Dorsolateral prefrontal cortex (tissue), 120 donors: ENCODE measurements at regions of chr14 and their contacts with region 1.

Region 1: GRCh38 chr14:23379366-23380196 is 2.7 kb downstream of the CMTM5 start:
- DNase-seq: peak in 2 of 10 donors; percentile 41 to 62
- H3K4me3 ChIP-seq: peak overlapping the region in 20 of 59 donors; percentile 46 to 78 (median 62)
- H3K27ac ChIP-seq: peak overlapping the region in 54 of 59 donors; percentile 43 to 99 (median 95)
- H3K27me3 ChIP-seq: no peaks in the 10 kb centered on the region
- CTCF ChIP-seq: peak; percentile 28 to 95 (median 80)

Region 2: GRCh38 chr14:23269193-23269592 is 110.4 kb before region 1 on chr14:
- intact Hi-C with region 1: loop called (anchors 5 to 10 kb)
- DNase-seq: no peak
- H3K4me3 ChIP-seq: no peak overlapping the region
- H3K27ac ChIP-seq: no peak overlapping the region
- H3K27me3 ChIP-seq: no peaks in the 10 kb centered on the region
- CTCF ChIP-seq: no peak

Region 3: GRCh38 chr14:23320774-23321571 is 58.6 kb before region 1 on chr14 and contains the start of gene PABPN1:
- intact Hi-C with region 1: loop called in 1 of 2 experiments (anchors 2 kb)
- DNase-seq: peak; percentile 96 to 100 (median 100)
- H3K4me3 ChIP-seq: peak within 1 kb of the TSS; percentile 74 to 97 (median 89)
- H3K27ac ChIP-seq: peak within 1 kb of the TSS; percentile 88 to 99 (median 98)
- H3K27me3 ChIP-seq: no peaks in the 10 kb centered on the region
- CTCF ChIP-seq: peak in 20 of 56 donors; percentile 7 to 44 (median 14)
- total RNA-seq, gene PABPN1: 124 to 236 (median 157) TPM

Region 4: GRCh38 chr14:23345987-23346692 is 33.4 kb before region 1 on chr14:
- intact Hi-C with region 1: loop called in 1 of 2 experiments (anchors 5 kb)
- DNase-seq: no peak
- H3K4me3 ChIP-seq: no peak overlapping the region
- H3K27ac ChIP-seq: peak overlapping the region in 5 of 59 donors; percentile 0 to 35 (median 16)
- H3K27me3 ChIP-seq: no peaks in the 10 kb centered on the region
- CTCF ChIP-seq: peak in 2 of 56 donors; percentile 13 to 25

Region 5: GRCh38 chr14:23365603-23366425 is 13.8 kb before region 1 on chr14:
- intact Hi-C with region 1: loop called (anchors 1 kb)
- DNase-seq: peak in 2 of 10 donors; percentile 20 to 32
- H3K4me3 ChIP-seq: peak overlapping the region; percentile 41 to 73 (median 61)
- H3K27ac ChIP-seq: peak overlapping the region; percentile 88 to 99 (median 98)
- H3K27me3 ChIP-seq: peaks cover 0 to 28% (median 7%) of the 10 kb centered on the region in 45 donors
- CTCF ChIP-seq: no peak